CD4-positive, alpha-beta T cell (primary cell): ENCODE measurements at regions of chr15 and their contacts with region 1.

Region 1: GRCh38 chr15:78241007-78241406 is 6.6 kb upstream of the ACSBG1 start:
- DNase-seq: peak; percentile 67 to 89 (median 80)
- ATAC-seq: peak; percentile 92
- H3K4me3 ChIP-seq: no peak overlapping the region
- H3K4me3 Mint-ChIP-seq: no peak overlapping the region
- H3K27ac ChIP-seq: no peak overlapping the region
- H3K27ac Mint-ChIP-seq: no peak overlapping the region
- H3K4me1 ChIP-seq: peaks cover 5% of the 10 kb centered on the region
- H3K4me1 Mint-ChIP-seq: peaks cover 4% of the 10 kb centered on the region
- H3K27me3 ChIP-seq: no peaks in the 10 kb centered on the region
- H3K27me3 Mint-ChIP-seq: no peaks in the 10 kb centered on the region
- CTCF ChIP-seq: peak; percentile 74

Region 2: DNA sequence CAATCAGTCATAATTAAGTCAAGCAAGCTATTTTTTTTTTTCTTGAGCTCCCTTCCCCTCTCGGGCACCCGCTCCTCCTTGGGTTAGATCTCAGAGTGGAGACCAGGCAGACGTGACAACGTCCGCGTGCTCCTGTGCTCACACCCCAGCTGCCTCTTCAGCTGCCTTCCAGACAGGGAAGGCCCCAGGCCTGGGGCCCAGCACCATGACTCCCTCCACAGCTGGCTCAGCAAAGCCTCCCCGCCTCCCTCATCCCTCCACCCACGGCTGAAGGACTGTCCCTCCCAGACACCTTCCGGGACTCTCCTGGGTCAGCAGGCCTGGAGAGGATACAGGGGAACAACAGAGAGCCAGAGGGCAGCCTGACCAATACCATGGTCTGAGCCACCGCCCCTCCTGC is 520.4 kb before region 1 on chr15:
- CTCF ChIA-PET with region 1: no interaction called
- POLR2A ChIA-PET with region 1: no interaction called
- intact Hi-C with region 1: no loop called
- DNase-seq: no peak
- ATAC-seq: no peak
- H3K4me3 ChIP-seq: no peak overlapping the region
- H3K4me3 Mint-ChIP-seq: no peak overlapping the region
- H3K27ac ChIP-seq: no peak overlapping the region
- H3K27ac Mint-ChIP-seq: no peak overlapping the region
- H3K4me1 ChIP-seq: no peaks in the 10 kb centered on the region
- H3K4me1 Mint-ChIP-seq: no peaks in the 10 kb centered on the region
- H3K27me3 ChIP-seq: no peaks in the 10 kb centered on the region
- H3K27me3 Mint-ChIP-seq: peaks cover 20% of the 10 kb centered on the region
- CTCF ChIP-seq: no peak

Region 3: GRCh38 chr15:77907824-77908751 is 332.9 kb before region 1 on chr15:
- CTCF ChIA-PET with region 1: interaction called, 16 read pairs
- POLR2A ChIA-PET with region 1: no interaction called
- intact Hi-C with region 1: loop called (anchors 2 kb)
- DNase-seq: peak in 12 of 14 experiments; percentile 10 to 70 (median 34)
- ATAC-seq: peak; percentile 57
- H3K4me3 ChIP-seq: no peak overlapping the region
- H3K4me3 Mint-ChIP-seq: no peak overlapping the region
- H3K27ac ChIP-seq: no peak overlapping the region
- H3K27ac Mint-ChIP-seq: no peak overlapping the region
- H3K4me1 ChIP-seq: peaks cover 3% of the 10 kb centered on the region
- H3K4me1 Mint-ChIP-seq: no peaks in the 10 kb centered on the region
- H3K27me3 ChIP-seq: no peaks in the 10 kb centered on the region
- H3K27me3 Mint-ChIP-seq: peaks cover 7% of the 10 kb centered on the region
- CTCF ChIP-seq: peak; percentile 29

Region 4: GRCh38 chr15:77959432-77959879 is 281.6 kb before region 1 on chr15:
- CTCF ChIA-PET with region 1: interaction called, 4 read pairs
- POLR2A ChIA-PET with region 1: no interaction called
- intact Hi-C with region 1: loop called (anchors 1 to 2 kb)
- DNase-seq: peak; percentile 52 to 81 (median 68)
- ATAC-seq: peak; percentile 99
- H3K4me3 ChIP-seq: no peak overlapping the region
- H3K4me3 Mint-ChIP-seq: no peak overlapping the region
- H3K27ac ChIP-seq: no peak overlapping the region
- H3K27ac Mint-ChIP-seq: no peak overlapping the region
- H3K4me1 ChIP-seq: peaks cover 6% of the 10 kb centered on the region
- H3K4me1 Mint-ChIP-seq: no peaks in the 10 kb centered on the region
- H3K27me3 ChIP-seq: no peaks in the 10 kb centered on the region
- H3K27me3 Mint-ChIP-seq: no peaks in the 10 kb centered on the region
- CTCF ChIP-seq: peak; percentile 93

Region 5: DNA sequence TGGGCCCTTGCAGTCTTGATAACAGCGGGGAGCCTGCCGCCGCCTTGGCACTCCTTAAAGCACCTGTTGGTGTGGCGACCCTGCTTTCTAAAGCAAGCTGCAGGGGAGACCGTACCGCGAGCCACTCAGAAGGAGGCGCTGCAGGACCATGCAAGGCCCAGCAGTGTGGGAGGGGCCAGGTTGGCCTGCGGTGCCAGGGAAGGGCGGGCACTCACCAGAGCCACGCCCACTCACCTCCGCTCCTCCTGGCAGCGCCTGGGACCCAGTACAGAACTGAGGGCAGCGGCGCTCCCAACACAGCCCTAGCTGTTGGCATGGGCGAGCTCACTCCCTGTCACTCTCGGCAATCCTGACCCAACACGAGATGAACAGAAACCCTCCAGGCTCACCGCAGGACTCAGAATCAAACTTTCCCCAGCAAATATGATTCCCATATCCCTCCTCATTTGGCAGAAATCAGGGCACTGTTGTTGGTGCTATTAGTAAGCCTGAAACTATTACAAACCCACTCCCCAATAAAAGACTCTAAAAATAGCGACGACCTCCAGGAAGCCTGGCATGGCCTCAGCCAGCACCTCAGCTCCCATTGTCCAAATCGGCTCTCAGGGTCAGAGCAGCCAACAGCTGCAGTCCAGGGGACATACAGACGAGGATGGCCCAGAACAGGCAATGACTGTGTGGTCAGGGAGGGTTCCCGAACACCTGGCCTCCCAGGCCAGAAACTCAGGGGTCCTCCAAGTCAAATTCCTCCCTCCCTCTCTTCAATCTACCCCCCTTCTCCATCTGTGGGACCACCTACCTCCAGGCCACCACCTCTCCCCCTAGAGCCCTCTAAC is 240.7 kb before region 1 on chr15:
- CTCF ChIA-PET with region 1: no interaction called
- POLR2A ChIA-PET with region 1: no interaction called
- intact Hi-C with region 1: loop called in 1 of 2 experiments (anchors 1 kb)
- DNase-seq: peak; percentile 64 to 91 (median 78)
- ATAC-seq: peak; percentile 100
- H3K4me3 ChIP-seq: no peak overlapping the region
- H3K4me3 Mint-ChIP-seq: no peak overlapping the region
- H3K27ac ChIP-seq: no peak overlapping the region
- H3K27ac Mint-ChIP-seq: peak overlapping the region; percentile 45
- H3K4me1 ChIP-seq: peaks cover 14% of the 10 kb centered on the region
- H3K4me1 Mint-ChIP-seq: peaks cover 11% of the 10 kb centered on the region
- H3K27me3 ChIP-seq: no peaks in the 10 kb centered on the region
- H3K27me3 Mint-ChIP-seq: no peaks in the 10 kb centered on the region
- CTCF ChIP-seq: peak; percentile 70

Region 6: DNA sequence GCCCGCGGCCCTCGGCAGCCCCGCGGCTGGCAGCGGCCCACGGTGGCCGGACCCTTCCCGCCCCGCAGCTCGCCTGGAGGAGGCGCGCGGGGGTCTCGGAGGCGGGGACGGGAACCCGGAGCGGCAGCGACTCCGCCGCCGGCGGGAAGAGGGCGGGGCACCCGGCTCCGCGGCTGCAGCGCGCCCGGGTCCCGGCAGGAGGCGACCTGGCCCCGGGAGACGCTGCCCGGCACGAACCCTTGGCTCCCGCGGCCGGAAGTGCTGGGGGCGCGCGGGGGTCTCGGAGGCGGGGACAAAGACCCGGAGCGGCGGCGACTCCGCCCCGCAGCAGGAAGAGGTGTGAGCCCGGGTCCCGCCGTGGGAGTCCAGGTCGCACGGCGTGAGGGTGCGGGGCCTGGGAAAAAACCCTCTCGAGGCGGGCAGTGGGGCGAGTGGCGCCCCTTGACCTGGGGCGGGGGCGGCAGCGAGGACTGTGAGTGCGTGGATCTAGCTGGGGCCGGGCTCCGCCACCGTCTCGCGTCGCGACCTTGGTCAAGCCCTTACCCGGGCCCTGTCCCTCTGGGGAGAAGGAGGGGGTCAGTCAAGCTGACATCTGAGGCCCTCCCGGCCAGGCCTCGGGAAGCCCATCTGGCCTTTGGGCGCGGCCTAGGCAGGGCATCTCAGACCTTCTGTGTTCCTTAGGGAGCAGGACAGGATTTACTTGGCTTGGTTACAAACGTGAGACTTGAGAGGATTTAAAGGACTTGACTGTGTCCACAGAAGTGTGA is 109.5 kb before region 1 on chr15 and contains the start of gene CIB2:
- CTCF ChIA-PET with region 1: interaction called, 3 read pairs
- POLR2A ChIA-PET with region 1: interaction called, 4 read pairs
- intact Hi-C with region 1: loop called in 1 of 2 experiments (anchors 5 kb)
- DNase-seq: peak; percentile 46 to 89 (median 72)
- ATAC-seq: peak; percentile 89
- H3K4me3 ChIP-seq: peak within 1 kb of the TSS; percentile 91
- H3K4me3 Mint-ChIP-seq: peak within 1 kb of the TSS; percentile 89
- H3K27ac ChIP-seq: peak within 1 kb of the TSS; percentile 39 to 86
- H3K27ac Mint-ChIP-seq: peak within 1 kb of the TSS; percentile 73
- H3K4me1 ChIP-seq: peaks cover 18% of the 10 kb centered on the region
- H3K4me1 Mint-ChIP-seq: peaks cover 27% of the 10 kb centered on the region
- H3K27me3 ChIP-seq: no peaks in the 10 kb centered on the region
- H3K27me3 Mint-ChIP-seq: no peaks in the 10 kb centered on the region
- CTCF ChIP-seq: peak; percentile 66
- total RNA-seq, gene CIB2: 0.82 to 1.7 TPM

Region 7: DNA sequence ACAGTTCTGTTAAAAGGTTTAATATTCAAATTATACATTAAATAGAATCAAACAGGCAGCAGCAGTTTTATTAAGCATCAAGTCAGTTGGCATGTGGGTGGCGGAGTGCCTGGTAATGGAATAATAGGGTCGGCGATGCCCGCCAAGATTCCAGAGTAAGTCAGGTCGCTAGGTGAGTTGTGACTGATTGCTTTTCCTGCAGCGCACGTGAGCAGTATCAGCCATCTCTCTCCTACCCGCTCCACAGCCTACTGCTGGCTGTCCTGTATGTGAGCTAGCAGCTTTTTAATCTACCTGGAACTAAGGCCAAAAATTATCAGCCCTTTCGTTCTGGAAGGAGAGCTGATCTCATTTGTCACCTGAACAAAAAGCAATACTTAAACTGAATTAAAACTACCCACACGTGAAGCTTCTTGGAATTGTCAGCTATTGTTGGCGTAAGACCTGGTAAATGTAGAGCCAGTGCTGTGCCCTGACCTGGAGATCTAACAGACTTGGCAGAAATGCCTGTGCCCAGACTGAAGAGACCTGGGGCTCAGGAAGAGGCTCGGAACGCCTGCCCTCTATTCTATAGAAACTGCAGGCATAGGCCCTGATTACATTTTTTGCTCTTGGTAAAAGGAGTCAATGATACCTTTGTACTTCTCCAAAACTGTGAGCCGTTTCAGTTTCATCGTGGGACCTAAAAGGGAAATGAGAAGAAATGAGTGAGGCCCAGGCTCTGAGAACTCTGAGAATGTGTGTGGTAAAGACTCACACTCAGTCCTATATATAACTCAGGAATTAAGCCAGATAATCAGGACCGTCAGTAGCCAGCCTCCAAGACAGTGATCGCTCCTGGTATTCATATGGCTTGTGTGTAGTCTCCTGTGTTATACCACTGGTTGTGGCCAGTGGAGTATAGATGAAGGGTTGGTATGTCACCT is 69.9 kb before region 1 on chr15:
- CTCF ChIA-PET with region 1: no interaction called
- POLR2A ChIA-PET with region 1: no interaction called
- intact Hi-C with region 1: no loop called
- DNase-seq: peak in 1 of 14 experiments; percentile 30
- ATAC-seq: no peak
- H3K4me3 ChIP-seq: no peak overlapping the region
- H3K4me3 Mint-ChIP-seq: no peak overlapping the region
- H3K27ac ChIP-seq: no peak overlapping the region
- H3K27ac Mint-ChIP-seq: no peak overlapping the region
- H3K4me1 ChIP-seq: peaks cover 19% of the 10 kb centered on the region
- H3K4me1 Mint-ChIP-seq: peaks cover 48% of the 10 kb centered on the region
- H3K27me3 ChIP-seq: no peaks in the 10 kb centered on the region
- H3K27me3 Mint-ChIP-seq: no peaks in the 10 kb centered on the region
- CTCF ChIP-seq: no peak

Region 8: GRCh38 chr15:78195735-78196201 is 45.2 kb before region 1 on chr15:
- CTCF ChIA-PET with region 1: no interaction called
- POLR2A ChIA-PET with region 1: no interaction called
- intact Hi-C with region 1: loop called (anchors 1 kb)
- DNase-seq: peak; percentile 17 to 75 (median 39)
- ATAC-seq: peak; percentile 86
- H3K4me3 ChIP-seq: no peak overlapping the region
- H3K4me3 Mint-ChIP-seq: no peak overlapping the region
- H3K27ac ChIP-seq: no peak overlapping the region
- H3K27ac Mint-ChIP-seq: no peak overlapping the region
- H3K4me1 ChIP-seq: peaks cover 4% of the 10 kb centered on the region
- H3K4me1 Mint-ChIP-seq: no peaks in the 10 kb centered on the region
- H3K27me3 ChIP-seq: no peaks in the 10 kb centered on the region
- H3K27me3 Mint-ChIP-seq: no peaks in the 10 kb centered on the region
- CTCF ChIP-seq: peak; percentile 81

Region 9: GRCh38 chr15:78469031-78469430 is 228.0 kb after region 1 on chr15:
- CTCF ChIA-PET with region 1: no interaction called
- POLR2A ChIA-PET with region 1: no interaction called
- intact Hi-C with region 1: no loop called
- DNase-seq: no peak
- ATAC-seq: no peak
- H3K4me3 ChIP-seq: no peak overlapping the region
- H3K4me3 Mint-ChIP-seq: no peak overlapping the region
- H3K27ac ChIP-seq: no peak overlapping the region
- H3K27ac Mint-ChIP-seq: no peak overlapping the region
- H3K4me1 ChIP-seq: no peaks in the 10 kb centered on the region
- H3K4me1 Mint-ChIP-seq: peaks cover 1% of the 10 kb centered on the region
- H3K27me3 ChIP-seq: no peaks in the 10 kb centered on the region
- H3K27me3 Mint-ChIP-seq: no peaks in the 10 kb centered on the region
- CTCF ChIP-seq: no peak